Activated T-helper 2 cell treated with anti-CD3 and anti-CD28 coated beads, Interferon-gamma antibody, Interleukin-2, Interleukin-4, amounts not matched to agents 10 μg/mL and 5 μg/mL and 100 μg/mL, durations not matched to agents 14 hours and 24 hours and 36 hours (primary cell): ENCODE measurements at regions of chrX and their contacts with region 1.

Region 1: DNA sequence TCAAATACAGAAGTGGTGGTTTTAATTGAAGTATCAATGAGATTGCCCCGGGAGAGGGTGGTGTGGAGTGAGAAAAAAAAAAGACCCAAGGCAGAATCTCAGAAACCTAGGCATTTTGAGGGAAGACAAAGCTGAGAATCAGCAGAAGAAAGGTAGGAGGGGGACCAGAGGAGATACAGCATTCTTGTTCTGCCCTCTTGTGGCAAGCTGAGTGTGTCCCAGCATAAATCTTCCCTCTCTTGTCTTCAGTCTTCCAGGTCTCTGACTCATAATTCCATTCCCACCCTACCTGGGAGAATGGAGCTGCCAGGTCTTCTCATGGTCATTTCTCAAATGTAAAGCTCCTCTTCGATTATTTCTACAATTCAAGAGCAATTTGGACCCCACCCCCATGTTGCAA is 32.7 kb upstream of the MAGED1 start:
- DNase-seq: no peak
- H3K4me3 Mint-ChIP-seq: no peak overlapping the region
- H3K27ac Mint-ChIP-seq: no peak overlapping the region
- H3K4me1 Mint-ChIP-seq: peaks cover 8% of the 10 kb centered on the region
- H3K27me3 Mint-ChIP-seq: no peaks in the 10 kb centered on the region

Region 2: GRCh38 chrX:51641421-51642021 is 219.2 kb before region 1 on chrX:
- intact Hi-C with region 1: loop called (anchors 5 kb)
- DNase-seq: no peak
- H3K4me3 Mint-ChIP-seq: no peak overlapping the region
- H3K27ac Mint-ChIP-seq: no peak overlapping the region
- H3K4me1 Mint-ChIP-seq: no peaks in the 10 kb centered on the region
- H3K27me3 Mint-ChIP-seq: peaks cover 5% of the 10 kb centered on the region

Region 3: DNA sequence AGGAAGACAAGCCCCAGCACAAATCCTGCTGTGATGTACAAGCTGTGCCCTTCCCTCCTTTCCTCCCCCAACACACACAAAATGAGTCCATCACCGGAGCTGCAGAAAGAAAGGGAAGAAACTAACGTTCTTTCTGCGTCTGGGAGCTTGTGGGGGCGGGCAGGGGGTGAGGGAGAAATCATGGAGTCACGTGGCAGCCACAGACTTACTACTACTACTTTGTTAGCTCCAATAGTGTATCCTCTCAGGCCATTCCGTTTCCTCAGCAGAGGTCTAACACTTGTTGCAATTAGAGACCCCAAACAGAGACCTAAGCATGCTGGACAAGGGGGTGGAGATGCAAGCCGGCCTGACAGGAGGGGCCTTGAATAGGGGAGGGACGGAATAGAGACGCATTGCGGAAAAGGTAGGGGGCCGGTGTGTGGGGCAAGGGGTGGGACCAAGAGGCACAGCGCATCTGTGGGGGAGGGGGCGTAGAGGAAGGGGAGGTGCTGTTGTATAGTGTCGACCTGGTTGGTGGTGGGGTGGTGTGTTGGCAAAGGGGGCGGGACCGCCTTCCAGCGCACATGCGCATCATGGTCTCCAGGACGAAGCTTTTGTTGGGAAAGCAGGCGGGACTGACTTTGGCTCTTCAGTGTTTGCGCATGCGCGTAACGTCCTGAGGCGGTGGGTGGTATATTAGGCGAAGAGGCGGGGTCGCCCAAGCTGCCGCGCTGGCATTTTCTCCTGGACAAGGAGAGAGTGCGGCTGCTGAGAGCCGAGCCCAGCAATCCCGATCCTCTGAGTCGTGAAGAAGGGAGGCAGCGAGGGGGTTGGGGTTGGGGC is 32.5 kb after region 1 on chrX and contains the start of gene MAGED1:
- intact Hi-C with region 1: no loop called
- DNase-seq: peak; percentile 75
- H3K4me3 Mint-ChIP-seq: peak within 1 kb of the TSS; percentile 96
- H3K27ac Mint-ChIP-seq: peak within 1 kb of the TSS; percentile 91
- H3K4me1 Mint-ChIP-seq: peaks cover 25% of the 10 kb centered on the region
- H3K27me3 Mint-ChIP-seq: no peaks in the 10 kb centered on the region
- total RNA-seq, gene MAGED1: 45.5 and 46.5 TPM in 2 replicates